Naive thymus-derived CD4-positive, alpha-beta T cell (primary cell): ENCODE measurements at regions of chr5 and their contacts with region 1.

Region 1: DNA sequence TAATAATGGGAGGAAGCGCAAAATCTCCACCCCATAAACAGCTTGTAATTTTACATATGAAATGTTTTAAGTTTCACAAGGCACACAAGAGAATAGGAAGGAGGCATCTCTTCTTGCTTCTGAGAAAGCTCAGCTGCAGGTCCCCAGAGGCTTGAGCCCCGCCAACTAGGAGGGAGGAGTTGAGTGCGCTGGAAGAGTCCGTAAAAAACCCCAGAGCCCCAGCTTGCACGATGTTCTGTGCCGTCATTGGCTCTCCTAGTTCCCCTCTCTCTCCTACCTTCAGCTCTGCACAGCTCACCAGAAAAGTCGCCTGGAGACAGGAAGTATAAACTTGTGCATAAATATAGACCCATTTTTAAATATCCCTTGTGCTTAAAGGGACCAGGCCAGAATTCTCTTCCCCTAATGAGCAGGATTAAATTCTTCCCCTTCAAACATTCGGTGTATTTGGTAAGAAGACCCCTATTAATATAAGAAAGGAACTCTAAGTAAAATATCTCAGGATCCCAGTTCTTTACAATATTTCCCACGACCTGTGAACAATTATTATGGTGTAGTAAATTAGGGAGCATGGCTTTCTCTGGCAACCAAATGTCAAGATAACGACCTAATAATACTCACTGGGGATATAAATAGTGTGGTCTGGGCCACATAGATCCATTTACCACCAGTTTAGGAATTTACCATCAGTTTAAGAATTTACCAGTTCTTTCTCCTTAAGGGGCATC is 13.7 kb downstream of the GLRX start:
- DNase-seq: peak; percentile 54 to 92 (median 88)
- ATAC-seq: peak; percentile 100
- H3K4me3 ChIP-seq: peak overlapping the region; percentile 24
- H3K4me3 Mint-ChIP-seq: peak overlapping the region; percentile 21 to 84 (median 76)
- H3K27ac ChIP-seq: peak overlapping the region; percentile 75
- H3K27ac Mint-ChIP-seq: peak overlapping the region; percentile 76 to 98 (median 90)
- H3K4me1 ChIP-seq: peaks cover 31 to 49% of the 10 kb centered on the region in 2 donors
- H3K4me1 Mint-ChIP-seq: peaks cover 53 to 71% (median 64%) of the 10 kb centered on the region in 7 donors
- H3K27me3 ChIP-seq: no peaks in the 10 kb centered on the region
- H3K27me3 Mint-ChIP-seq: no peaks in the 10 kb centered on the region

Region 2: DNA sequence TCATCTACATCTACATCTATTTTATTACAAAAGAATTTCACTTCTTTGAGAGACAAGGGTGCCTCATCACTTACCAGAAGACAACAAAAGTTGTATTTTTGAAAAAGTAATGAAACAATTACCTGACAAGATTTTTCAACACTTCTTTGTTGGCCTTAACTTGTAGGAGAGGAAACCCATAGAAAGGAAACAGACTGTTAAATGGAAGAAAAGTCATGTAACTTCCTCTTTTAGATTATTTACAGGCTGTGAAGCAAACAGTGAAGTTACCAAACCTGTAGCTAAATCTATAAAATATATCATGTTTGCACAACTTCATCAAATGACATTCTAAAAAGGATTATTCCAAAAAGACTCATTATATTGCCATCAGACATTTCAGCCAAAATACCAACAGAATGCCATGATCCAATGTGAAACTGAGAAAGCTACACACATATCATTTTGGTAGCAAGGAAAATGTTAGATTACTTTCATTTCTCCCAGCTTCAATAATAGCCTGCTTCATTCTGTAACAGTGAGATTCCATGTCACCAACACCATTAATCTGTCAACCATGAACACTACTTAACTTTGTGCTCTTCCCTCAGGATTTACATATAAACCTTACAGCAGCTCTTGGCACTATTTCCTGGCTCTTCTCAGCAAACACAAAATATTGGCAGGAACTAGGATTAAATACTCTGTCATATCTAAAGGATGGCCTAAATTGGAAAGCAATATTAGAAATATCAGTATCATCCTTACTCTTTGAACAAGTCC is 646.4 kb before region 1 on chr5:
- CTCF ChIA-PET with region 1: no interaction called
- POLR2A ChIA-PET with region 1: no interaction called
- intact Hi-C with region 1: no loop called
- DNase-seq: no peak
- ATAC-seq: no peak
- H3K4me3 ChIP-seq: no peak overlapping the region
- H3K4me3 Mint-ChIP-seq: no peak overlapping the region
- H3K27ac ChIP-seq: no peak overlapping the region
- H3K27ac Mint-ChIP-seq: no peak overlapping the region
- H3K4me1 ChIP-seq: no peaks in the 10 kb centered on the region
- H3K4me1 Mint-ChIP-seq: peaks cover 0 to 13% (median 5%) of the 10 kb centered on the region in 7 donors
- H3K27me3 ChIP-seq: no peaks in the 10 kb centered on the region
- H3K27me3 Mint-ChIP-seq: peaks cover 0 to 5% (median 0%) of the 10 kb centered on the region in 5 donors

Region 3: GRCh38 chr5:95835682-95836385 is 27.0 kb after region 1 on chr5:
- CTCF ChIA-PET with region 1: interaction called, 11 read pairs
- POLR2A ChIA-PET with region 1: interaction called, 23 read pairs
- intact Hi-C with region 1: loop called (anchors 1 kb)
- DNase-seq: peak in 4 of 9 donors; percentile 27 to 38 (median 36)
- ATAC-seq: no peak
- H3K4me3 ChIP-seq: peak overlapping the region; percentile 60
- H3K4me3 Mint-ChIP-seq: peak overlapping the region; percentile 85 to 96 (median 92)
- H3K27ac ChIP-seq: peak overlapping the region; percentile 74
- H3K27ac Mint-ChIP-seq: peak overlapping the region; percentile 75 to 98 (median 92)
- H3K4me1 ChIP-seq: peaks cover 15 to 21% of the 10 kb centered on the region in 2 donors
- H3K4me1 Mint-ChIP-seq: peaks cover 36 to 63% (median 61%) of the 10 kb centered on the region in 7 donors
- H3K27me3 ChIP-seq: no peaks in the 10 kb centered on the region
- H3K27me3 Mint-ChIP-seq: no peaks in the 10 kb centered on the region